Activated B cell treated with CpG ODN at 0.5 μM for 24 hours (primary cell): ENCODE measurements at regions of chr12 and their contacts with region 1.

Region 1: GRCh38 chr12:49644620-49644994 is 21.2 kb downstream of the PRPF40B start:
- DNase-seq: peak; percentile 71
- ATAC-seq: peak; percentile 92
- H3K4me3 Mint-ChIP-seq: peak overlapping the region; percentile 12
- H3K27ac Mint-ChIP-seq: peak overlapping the region; percentile 81
- H3K4me1 Mint-ChIP-seq: peaks cover 24% of the 10 kb centered on the region
- H3K27me3 Mint-ChIP-seq: no peaks in the 10 kb centered on the region
- CTCF ChIP-seq: peak; percentile 93

Region 2: DNA sequence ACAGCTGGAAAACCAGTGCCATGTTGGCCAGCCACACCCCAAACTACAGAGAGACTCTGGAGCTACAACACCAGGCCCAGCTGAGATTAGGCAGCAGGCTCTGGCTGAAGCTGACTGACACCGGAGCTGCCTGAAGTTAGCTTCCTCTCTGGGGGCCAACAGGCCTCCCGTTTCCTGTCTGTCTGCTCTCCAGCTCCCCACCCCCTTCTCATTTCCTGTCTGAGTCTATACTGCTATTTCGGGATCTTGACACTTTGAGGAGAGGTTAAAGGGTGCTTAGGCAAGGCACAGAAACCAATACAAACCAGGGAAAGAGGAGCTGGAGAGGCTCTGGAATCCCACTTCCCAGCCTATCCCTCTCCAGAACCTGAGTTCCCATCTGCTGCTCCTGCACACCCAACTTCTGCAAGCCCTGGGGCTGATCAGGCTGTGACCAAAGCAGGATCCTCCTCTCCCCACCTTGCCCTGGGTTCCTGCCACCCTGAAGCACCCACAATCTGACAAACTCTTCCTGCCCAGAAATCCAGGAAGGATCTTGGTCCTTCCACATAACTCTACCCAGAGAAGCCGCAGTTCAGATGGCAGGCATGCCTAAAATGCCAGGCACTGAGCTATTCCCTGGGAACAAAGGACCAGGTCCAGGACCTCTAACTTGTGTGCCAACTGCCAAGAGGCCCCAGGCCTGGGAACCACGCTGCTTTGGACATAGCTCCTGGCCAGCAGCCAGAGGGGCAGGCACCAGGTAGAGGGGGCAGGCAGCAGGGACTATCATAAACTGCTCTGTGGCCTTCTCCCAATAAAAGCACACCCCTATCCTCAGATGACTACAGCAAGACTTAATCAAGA is 18.6 kb after region 1 on chr12:
- CTCF ChIA-PET with region 1: interaction called, 18 read pairs
- POLR2A ChIA-PET with region 1: interaction called, 10 read pairs
- intact Hi-C with region 1: loop called (anchors 1 kb)
- DNase-seq: peak; percentile 48
- ATAC-seq: peak; percentile 83
- H3K4me3 Mint-ChIP-seq: peak overlapping the region; percentile 80
- H3K27ac Mint-ChIP-seq: peak overlapping the region; percentile 94
- H3K4me1 Mint-ChIP-seq: peaks cover 85% of the 10 kb centered on the region
- H3K27me3 Mint-ChIP-seq: no peaks in the 10 kb centered on the region
- CTCF ChIP-seq: no peak

Region 3: DNA sequence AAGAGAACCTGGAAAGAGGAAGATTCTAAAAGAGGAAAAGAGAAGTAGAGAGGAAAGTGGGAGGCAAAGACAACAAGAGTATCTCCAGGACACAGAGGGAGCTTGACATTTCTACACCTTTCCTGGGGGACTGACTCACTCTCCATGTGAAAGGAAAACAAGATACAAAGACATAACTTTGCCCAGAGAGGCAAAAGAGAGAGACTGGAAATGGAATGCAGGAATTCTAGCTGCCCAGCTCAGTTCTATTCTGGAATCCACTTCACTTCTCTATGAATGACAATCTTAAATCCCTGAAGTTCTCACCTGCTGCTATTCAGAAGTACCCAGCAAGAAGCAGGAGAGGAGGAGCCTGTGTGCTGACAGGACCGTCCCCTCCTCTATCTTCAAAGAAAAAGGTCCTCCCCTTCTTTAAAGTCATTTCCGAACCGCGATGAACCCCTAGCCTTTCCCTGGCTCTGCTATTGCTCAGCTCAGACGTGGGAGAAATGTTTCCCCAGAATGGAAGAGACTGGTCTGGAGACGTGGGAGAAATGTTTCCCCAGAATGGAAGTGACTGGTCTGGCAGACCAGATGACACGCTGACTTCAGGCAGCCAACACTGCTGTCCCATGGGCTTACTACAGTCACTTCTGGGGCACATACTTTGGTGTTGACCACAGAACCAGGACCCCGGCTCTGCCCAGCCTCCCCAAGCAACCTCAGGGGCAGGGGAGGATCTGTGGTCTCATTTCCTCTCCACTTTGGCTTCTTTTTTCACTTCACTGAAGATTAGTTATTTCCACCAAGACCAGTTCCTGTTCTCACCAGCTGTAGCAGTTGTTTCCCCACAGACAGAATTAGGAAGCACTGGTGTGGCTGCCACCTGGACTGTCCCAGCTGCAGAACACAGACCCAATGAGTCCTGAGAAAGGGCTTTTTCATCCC is 54.3 kb after region 1 on chr12:
- CTCF ChIA-PET with region 1: interaction called, 284 read pairs
- POLR2A ChIA-PET with region 1: interaction called, 13 read pairs
- intact Hi-C with region 1: loop called (anchors 2 kb)
- DNase-seq: peak; percentile 57
- ATAC-seq: peak; percentile 82
- H3K4me3 Mint-ChIP-seq: peak overlapping the region; percentile 84
- H3K27ac Mint-ChIP-seq: peak overlapping the region; percentile 96
- H3K4me1 Mint-ChIP-seq: peaks cover 83% of the 10 kb centered on the region
- H3K27me3 Mint-ChIP-seq: no peaks in the 10 kb centered on the region
- CTCF ChIP-seq: no peak

Region 4: GRCh38 chr12:49776413-49776812 is 131.8 kb after region 1 on chr12:
- CTCF ChIA-PET with region 1: interaction called, 7 read pairs
- POLR2A ChIA-PET with region 1: interaction called, 6 read pairs
- intact Hi-C with region 1: loop called (anchors 1 kb)
- DNase-seq: no peak
- ATAC-seq: peak; percentile 85
- H3K4me3 Mint-ChIP-seq: no peak overlapping the region
- H3K27ac Mint-ChIP-seq: no peak overlapping the region
- H3K4me1 Mint-ChIP-seq: peaks cover 13% of the 10 kb centered on the region
- H3K27me3 Mint-ChIP-seq: peaks cover 17% of the 10 kb centered on the region
- CTCF ChIP-seq: no peak

Region 5: GRCh38 chr12:49882851-49883470 is 238.4 kb after region 1 on chr12:
- CTCF ChIA-PET with region 1: no interaction called
- POLR2A ChIA-PET with region 1: no interaction called
- intact Hi-C with region 1: no loop called
- DNase-seq: no peak
- ATAC-seq: no peak
- H3K4me3 Mint-ChIP-seq: no peak overlapping the region
- H3K27ac Mint-ChIP-seq: peak overlapping the region; percentile 10
- H3K4me1 Mint-ChIP-seq: no peaks in the 10 kb centered on the region
- H3K27me3 Mint-ChIP-seq: peaks cover 21% of the 10 kb centered on the region
- CTCF ChIP-seq: no peak